Activated T-helper 1 cell treated with anti-CD3 and anti-CD28 coated beads, Interleukin-12 subunit alpha, Interleukin-12 subunit beta, Interleukin-2, Interleukin-4 antibody, amounts not matched to agents 30 ng/mL and 10 ng/mL and 1 ng/mL, durations not matched to agents 14 hours and 24 hours and 36 hours (primary cell): ENCODE measurements at regions of chr3 and their contacts with region 1.

Region 1: DNA sequence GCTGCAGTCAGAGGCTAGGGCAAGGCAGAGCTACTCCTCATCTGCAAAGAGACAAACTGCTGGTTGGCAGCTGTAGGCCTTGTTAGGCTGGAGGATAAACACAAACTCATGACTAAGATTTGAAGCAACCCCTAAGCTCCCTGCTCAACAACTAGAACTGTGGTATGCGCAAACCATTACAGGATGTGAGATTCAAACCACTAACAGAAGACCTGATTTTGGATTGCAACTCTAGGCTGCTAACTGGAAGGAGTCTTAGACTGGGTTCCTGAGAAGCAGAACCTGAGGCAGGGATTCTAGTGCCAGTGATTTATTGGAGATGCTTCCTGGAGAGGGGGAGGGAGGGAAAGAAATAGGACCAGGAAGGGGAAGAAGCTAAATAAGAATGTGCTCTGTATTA is 22.5 kb downstream of the CCR4 start:
- DNase-seq: peak; percentile 46
- H3K4me3 Mint-ChIP-seq: no peak overlapping the region
- H3K27ac Mint-ChIP-seq: peak overlapping the region; percentile 56
- H3K4me1 Mint-ChIP-seq: peaks cover 62% of the 10 kb centered on the region
- H3K27me3 Mint-ChIP-seq: peaks cover 2% of the 10 kb centered on the region

Region 2: DNA sequence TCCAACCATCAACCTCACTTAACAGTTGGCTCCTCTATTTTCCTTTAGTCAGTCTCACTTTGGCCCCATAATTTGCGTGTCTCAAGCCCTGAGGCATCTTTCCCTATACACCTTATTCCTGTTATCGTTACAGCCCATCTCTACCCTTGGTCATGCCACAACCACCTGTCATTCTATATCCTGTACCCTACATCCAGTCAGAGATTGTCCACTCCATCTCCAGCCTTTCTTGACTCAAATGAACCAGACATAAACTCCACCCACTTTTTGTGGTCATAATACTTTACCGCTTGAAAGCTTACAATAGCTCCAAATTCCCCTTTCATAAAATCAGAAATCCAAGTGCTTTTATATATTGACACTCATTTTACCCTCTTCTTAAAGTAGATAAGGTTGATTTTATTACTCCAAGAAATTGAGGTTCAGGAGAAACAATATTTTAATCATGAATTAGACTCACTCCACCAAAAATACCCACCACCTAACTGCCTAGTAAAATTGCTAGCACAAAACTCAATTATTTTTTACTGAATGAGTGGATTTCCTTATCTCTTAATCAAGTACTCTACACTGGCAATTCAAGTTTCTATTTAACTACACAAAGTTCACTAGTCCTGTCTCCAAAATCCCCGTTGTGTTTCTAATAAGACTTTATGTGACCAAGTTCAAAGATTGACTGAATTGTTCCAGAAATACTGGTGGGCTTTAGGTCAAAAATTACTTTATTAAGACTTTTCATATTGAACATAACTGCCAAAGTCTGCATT is 13.4 kb before region 1 on chr3:
- intact Hi-C with region 1: loop called (anchors 1 kb)
- DNase-seq: no peak
- H3K4me3 Mint-ChIP-seq: peak overlapping the region; percentile 34
- H3K27ac Mint-ChIP-seq: peak overlapping the region; percentile 97
- H3K4me1 Mint-ChIP-seq: peaks cover 56% of the 10 kb centered on the region
- H3K27me3 Mint-ChIP-seq: no peaks in the 10 kb centered on the region

Region 3: DNA sequence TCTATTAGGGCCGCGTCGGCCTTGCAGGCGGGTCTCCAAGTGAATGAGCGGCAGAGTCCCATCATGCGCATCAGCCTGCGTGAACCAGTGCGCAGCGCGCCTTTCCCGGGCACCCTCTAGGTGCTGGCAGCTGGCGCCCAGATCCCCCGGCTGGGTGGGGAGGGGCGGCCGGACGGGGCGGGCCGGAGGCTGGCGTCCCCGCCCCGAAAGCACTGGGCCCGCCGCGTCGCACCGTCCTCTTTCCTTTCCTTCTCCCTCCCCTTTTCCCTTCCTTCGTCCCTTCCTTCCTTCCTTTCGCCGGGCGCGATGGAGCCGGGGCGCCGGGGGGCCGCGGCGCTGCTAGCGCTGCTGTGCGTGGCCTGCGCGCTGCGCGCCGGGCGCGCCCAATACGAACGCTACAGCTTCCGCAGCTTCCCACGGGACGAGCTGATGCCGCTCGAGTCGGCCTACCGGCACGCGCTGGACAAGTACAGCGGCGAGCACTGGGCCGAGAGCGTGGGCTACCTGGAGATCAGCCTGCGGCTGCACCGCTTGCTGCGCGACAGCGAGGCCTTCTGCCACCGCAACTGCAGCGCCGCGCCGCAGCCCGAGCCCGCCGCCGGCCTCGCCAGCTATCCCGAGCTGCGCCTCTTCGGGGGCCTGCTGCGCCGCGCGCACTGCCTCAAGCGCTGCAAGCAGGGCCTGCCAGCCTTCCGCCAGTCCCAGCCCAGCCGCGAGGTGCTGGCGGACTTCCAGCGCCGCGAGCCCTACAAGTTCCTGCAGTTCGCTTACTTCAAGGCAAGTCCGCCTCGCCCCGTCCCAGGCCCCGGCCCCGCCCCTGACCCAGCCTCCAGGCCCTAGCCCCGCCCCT is 140.0 kb after region 1 on chr3 and contains the start of gene CRTAP:
- intact Hi-C with region 1: no loop called
- DNase-seq: peak; percentile 78
- H3K4me3 Mint-ChIP-seq: peak within 1 kb of the TSS; percentile 87
- H3K27ac Mint-ChIP-seq: peak within 1 kb of the TSS; percentile 74
- H3K4me1 Mint-ChIP-seq: peaks cover 26% of the 10 kb centered on the region
- H3K27me3 Mint-ChIP-seq: no peaks in the 10 kb centered on the region
- total RNA-seq, gene CRTAP: 30.3 and 33.2 TPM in 2 replicates